ENCODE measurements at regions of chr20 and their contacts with region 1.

Region 1: DNA sequence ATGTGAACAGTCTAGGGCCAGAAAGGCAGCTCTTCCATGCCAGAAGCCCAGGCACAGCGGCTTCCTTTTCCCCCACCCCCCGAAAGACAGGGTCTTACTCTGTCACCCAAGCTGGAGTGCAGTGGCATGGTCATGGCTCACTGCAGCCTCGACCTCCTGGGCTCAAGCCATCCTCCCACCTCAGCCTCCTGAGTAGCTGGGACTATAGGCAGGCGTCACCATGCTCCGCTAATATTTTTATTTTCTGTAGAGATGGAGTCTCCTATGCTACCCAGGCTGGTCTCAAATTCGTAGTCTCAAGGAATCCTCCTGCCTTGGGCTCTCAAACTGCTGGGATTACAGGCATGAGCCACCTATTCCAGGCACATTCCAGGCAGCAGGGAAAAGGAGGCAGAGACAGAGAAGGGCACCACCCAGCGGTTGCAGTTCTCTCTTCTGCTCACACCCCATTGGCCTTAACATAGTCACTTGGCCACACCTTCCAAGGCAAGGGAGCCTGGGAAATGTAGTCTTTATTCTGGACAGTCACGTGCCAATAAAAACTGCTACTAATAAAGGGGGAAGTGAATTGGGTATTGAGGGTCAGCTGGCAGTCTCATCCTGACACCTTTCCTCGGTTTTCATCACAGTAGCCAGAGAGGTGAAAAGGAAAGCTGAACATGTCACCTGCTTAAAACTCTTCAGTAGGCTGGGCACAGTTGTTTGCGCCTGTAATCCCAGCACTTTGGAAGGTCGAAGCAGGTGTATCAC is 205.9 kb downstream of the ZMYND8 start:
- DNase-seq: peak; percentile 69

Region 2: GRCh38 chr20:46757754-46758678 is 392.6 kb before region 1 on chr20:
- in situ Hi-C with region 1: loop called (anchors 25 kb)
- DNase-seq: peak; percentile 85

Measured in KBM-7 (cell line).